Calu3 (cell line): ENCODE measurements at regions of chr12 and their contacts with region 1.

Region 1: DNA sequence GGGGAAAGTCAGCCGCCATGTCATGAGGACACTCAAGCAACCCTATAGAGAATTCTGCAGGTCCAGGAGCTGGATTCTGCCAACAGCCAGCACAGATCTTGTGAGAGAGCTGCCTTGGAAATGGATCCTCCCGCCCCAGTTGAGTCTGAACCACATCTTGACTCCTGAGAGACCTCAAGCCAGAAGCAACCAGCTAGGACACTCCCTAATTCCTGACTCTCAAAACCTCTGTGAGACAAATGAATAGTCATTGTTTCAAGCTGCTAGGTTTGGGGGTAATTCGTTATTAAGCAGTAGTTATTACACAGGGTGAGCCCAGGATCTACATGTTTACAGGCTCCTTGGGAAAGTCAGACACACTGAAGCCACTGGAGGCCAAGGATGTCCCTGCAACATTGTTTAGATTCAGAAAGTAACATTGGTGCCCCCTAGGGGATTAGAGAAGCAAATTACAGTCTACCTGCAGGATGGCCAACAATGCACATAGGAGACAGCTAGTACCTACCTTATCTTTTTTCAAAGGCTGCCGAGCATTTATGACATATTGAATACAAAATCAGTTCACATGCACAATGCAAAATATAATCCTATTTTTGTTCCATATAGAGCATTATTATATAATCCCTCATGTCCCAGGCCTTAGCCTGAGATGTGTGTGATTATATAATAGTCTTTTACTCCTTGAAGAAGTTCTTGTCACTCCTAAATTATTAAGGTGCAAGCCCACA is 57.9 kb upstream of the FICD start:
- DNase-seq: peak; percentile 12
- H3K4me3 Mint-ChIP-seq: no peak overlapping the region
- H3K27ac Mint-ChIP-seq: no peak overlapping the region
- H3K4me1 Mint-ChIP-seq: no peaks in the 10 kb centered on the region
- H3K27me3 Mint-ChIP-seq: peaks cover 84% of the 10 kb centered on the region
- CTCF ChIP-seq: peak; percentile 50

Region 2: DNA sequence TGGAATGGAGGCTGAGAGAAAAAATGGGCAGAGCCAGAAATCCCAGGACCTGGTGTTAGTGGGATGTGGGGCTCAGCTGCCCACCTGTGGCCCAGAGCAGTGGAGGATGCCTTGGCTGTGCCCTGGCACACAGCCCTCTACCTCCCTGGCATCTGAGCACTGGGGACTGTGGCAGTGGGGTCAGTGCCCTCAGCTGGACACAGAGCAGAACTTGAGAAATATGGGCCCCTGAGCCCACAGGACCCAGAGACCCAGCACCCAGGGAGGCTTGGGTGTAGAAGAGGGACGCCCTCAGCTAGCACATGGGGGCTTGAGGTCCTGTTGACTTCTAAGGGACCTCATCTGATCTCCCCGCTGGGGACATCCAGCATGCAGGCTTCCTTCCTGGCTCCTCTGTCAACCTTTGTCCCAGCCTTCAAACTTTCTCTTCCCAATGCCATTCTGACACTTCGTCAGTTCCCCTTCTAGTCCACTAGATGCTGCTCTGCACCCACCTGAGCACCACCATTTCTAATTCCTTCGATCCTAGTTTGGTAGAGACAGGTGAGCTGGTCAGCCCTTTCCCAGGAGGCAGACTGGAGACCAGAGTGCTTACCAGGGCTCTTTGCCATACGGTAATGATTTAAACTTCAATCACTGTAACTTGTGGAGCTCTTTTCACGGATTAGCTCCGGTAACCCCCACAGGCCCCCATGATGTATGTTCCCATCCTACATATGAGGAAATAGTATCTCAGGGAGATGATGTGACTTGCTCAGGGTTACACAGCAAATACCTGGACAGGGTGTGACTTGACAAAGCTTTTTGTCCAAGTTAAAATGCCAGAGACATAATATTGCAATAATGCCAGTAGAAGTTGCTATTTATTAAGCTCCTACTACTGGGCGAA is 539.0 kb before region 1 on chr12:
- CTCF ChIA-PET with region 1: no interaction called
- intact Hi-C with region 1: loop called (anchors 1 kb)
- DNase-seq: peak; percentile 36
- H3K4me3 Mint-ChIP-seq: no peak overlapping the region
- H3K27ac Mint-ChIP-seq: no peak overlapping the region
- H3K4me1 Mint-ChIP-seq: no peaks in the 10 kb centered on the region
- H3K27me3 Mint-ChIP-seq: peaks cover 88% of the 10 kb centered on the region
- CTCF ChIP-seq: peak; percentile 54

Region 3: DNA sequence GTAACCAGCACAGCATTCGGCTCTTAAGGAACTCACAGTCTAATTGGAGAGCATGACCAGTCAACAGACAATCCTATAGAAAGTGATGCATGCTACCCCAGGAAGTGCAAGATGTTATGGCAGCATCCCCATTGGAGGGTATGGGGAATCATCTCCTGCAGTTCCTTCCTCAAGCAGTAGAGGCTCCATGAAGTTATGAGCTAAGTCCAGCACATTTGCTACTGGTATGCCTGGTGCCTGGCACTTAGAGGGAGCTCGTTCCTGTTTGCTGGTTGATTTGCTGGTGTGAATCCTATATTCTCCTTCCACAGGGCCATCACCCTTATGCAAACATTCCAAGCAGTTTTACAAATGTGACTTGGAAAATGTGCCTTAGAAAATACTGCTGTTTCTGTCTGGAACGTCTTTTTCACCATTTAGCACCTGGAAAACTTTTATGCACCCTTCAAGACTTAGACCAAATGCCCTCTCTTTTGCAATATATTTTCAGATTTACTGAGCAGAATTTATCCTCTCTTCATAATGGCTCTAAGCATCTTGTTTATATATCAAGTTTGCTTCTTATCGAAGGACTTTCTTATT is 464.2 kb before region 1 on chr12:
- CTCF ChIA-PET with region 1: interaction called, 21 read pairs
- intact Hi-C with region 1: loop called (anchors 1 kb)
- DNase-seq: peak; percentile 53
- H3K4me3 Mint-ChIP-seq: no peak overlapping the region
- H3K27ac Mint-ChIP-seq: no peak overlapping the region
- H3K4me1 Mint-ChIP-seq: no peaks in the 10 kb centered on the region
- H3K27me3 Mint-ChIP-seq: peaks cover 45% of the 10 kb centered on the region
- CTCF ChIP-seq: peak; percentile 56

Region 4: DNA sequence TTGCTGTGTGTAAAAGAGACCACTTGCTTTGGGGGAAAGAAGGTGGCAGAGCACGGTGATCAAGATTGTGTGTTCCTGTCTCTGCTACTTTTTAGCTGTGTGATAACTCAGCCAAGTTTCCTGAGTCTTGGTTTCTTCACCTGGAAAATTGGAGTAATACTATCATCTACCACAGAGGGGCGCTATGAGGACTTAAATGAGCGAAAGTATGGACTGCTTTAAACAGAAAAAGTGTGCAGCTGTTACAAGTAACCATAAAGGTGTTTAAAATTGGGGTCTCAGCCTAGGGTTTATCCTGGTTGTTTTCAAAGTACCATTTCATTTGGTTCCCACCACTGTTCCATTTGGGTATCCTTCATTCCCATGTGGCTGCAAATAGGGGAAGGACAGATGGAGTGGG is 394.0 kb before region 1 on chr12:
- CTCF ChIA-PET with region 1: no interaction called
- intact Hi-C with region 1: loop called (anchors 5 kb)
- DNase-seq: no peak
- H3K4me3 Mint-ChIP-seq: no peak overlapping the region
- H3K27ac Mint-ChIP-seq: no peak overlapping the region
- H3K4me1 Mint-ChIP-seq: no peaks in the 10 kb centered on the region
- H3K27me3 Mint-ChIP-seq: peaks cover 30% of the 10 kb centered on the region
- CTCF ChIP-seq: peak; percentile 14

Region 5: DNA sequence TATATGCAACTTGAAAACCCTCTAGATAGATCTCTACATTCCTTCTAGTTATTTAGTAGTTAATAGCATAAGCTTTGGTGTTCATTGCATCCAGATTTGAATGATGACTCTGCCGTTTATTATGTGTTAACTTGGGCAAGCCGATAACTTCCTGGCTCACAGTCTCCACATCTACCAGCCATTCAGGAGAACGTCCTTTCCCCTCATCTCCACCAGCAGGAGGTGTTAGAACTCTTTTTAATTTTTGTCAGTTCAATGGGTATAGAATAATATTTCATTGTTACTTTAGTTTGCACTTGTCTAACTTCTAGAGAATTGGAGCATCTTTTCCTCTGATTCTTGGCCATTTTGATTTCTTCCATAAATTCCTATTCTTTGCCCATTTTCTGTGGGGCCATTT is 358.1 kb before region 1 on chr12:
- CTCF ChIA-PET with region 1: no interaction called
- intact Hi-C with region 1: loop called (anchors 1 kb)
- DNase-seq: no peak
- H3K4me3 Mint-ChIP-seq: no peak overlapping the region
- H3K27ac Mint-ChIP-seq: no peak overlapping the region
- H3K4me1 Mint-ChIP-seq: no peaks in the 10 kb centered on the region
- H3K27me3 Mint-ChIP-seq: peaks cover 72% of the 10 kb centered on the region
- CTCF ChIP-seq: no peak

Region 6: DNA sequence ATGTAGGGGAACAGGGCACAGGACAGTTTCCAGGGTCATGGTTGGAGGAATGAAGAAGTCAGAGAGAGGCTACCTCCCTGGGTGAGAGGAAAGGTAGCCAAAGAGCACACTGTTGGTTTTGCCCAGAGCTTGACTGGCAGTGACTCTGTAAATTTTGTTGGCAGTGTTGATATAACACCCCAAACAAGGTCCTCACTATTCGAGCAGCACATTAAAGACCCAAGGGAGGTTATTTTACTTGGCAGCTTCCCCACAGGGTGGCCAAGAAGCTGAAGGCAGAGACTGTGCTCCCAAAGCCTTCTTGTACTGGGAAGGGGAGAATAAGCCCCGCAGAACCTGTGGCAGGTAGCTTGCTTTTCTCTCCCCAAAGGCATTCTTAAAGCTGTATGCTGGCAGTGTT is 287.5 kb before region 1 on chr12:
- CTCF ChIA-PET with region 1: interaction called, 6 read pairs
- intact Hi-C with region 1: loop called (anchors 5 kb)
- DNase-seq: no peak
- H3K4me3 Mint-ChIP-seq: no peak overlapping the region
- H3K27ac Mint-ChIP-seq: no peak overlapping the region
- H3K4me1 Mint-ChIP-seq: no peaks in the 10 kb centered on the region
- H3K27me3 Mint-ChIP-seq: peaks cover 45% of the 10 kb centered on the region
- CTCF ChIP-seq: no peak